ENCODE measurements at regions of chr6 and their contacts with region 1.

Region 1: GRCh38 chr6:50791900-50792508 is 26.7 kb upstream of the TFAP2B start:
- DNase-seq: peak; percentile 29
- H3K4me3 Mint-ChIP-seq: no peak overlapping the region
- H3K27ac Mint-ChIP-seq: no peak overlapping the region
- H3K4me1 Mint-ChIP-seq: no peaks in the 10 kb centered on the region
- H3K27me3 Mint-ChIP-seq: peaks cover 17% of the 10 kb centered on the region
- CTCF ChIP-seq: peak; percentile 46

Region 2: GRCh38 chr6:50655848-50656453 is 136.1 kb before region 1 on chr6:
- CTCF ChIA-PET with region 1: no interaction called
- intact Hi-C with region 1: loop called (anchors 1 kb)
- DNase-seq: peak; percentile 36
- H3K4me3 Mint-ChIP-seq: no peak overlapping the region
- H3K27ac Mint-ChIP-seq: no peak overlapping the region
- H3K4me1 Mint-ChIP-seq: no peaks in the 10 kb centered on the region
- H3K27me3 Mint-ChIP-seq: no peaks in the 10 kb centered on the region
- CTCF ChIP-seq: peak; percentile 70

Measured in Calu3 (cell line).